Sigmoid colon (tissue), 7 donors: ENCODE measurements at regions of chr13 and their contacts with region 1.

Region 1: GRCh38 chr13:30865123-30866049 is 40.7 kb upstream of the MEDAG start:
- DNase-seq: peak; percentile 92
- H3K4me3 ChIP-seq: peak overlapping the region in 1 of 4 donors; percentile 17
- H3K27ac ChIP-seq: peak overlapping the region; percentile 73 to 87 (median 86)
- H3K4me1 ChIP-seq: peaks cover 0 to 77% (median 62%) of the 10 kb centered on the region in 4 donors
- H3K27me3 ChIP-seq: no peaks in the 10 kb centered on the region
- CTCF ChIP-seq: peak; percentile 86 to 97 (median 94)
- EP300 ChIP-seq: peak in 1 of 4 donors; percentile 1
- POLR2A ChIP-seq: no peak

Region 2: DNA sequence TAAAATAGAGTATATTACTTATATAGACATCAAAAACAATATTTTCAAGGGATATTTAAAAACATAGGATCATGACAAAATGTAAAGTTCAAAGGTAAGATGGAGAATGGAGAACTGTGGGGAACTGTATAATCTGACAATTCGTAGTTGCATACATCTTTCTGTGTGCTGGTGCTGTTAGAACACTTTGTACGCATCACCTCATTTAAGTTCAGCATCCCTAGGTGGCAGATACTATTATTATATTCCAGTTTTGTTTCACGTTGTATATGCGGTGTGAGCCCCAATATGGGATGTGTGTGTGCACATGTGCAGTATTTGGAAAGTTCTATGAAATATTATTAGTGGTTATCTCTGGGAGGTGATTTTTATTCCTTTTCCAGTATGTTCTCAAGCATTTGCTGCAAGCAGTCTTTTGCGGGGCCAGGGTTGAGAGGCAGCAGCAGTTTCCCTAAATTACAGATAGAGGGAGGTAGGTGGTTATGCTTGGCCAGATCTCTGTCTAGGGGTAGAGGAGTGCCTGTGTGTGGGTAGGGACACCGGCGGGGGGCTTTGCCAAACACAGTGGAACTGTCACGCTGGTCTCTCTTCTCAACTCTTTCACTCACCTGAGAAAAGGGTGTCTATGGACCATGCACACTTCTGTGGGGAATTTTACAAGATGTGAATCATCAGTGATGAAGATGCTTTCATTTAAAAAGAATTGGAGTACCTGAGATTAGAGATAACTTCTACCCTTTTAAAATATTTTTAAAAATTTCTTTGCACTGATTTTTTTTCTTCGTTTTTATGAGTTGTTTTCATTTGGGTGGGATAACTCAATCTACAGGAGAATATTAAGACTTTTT is 185.7 kb before region 1 on chr13:
- intact Hi-C with region 1: loop called (anchors 5 kb)
- DNase-seq: no peak
- H3K4me3 ChIP-seq: no peak overlapping the region
- H3K27ac ChIP-seq: no peak overlapping the region
- H3K4me1 ChIP-seq: peaks cover 0 to 11% (median 9%) of the 10 kb centered on the region in 4 donors
- H3K27me3 ChIP-seq: no peaks in the 10 kb centered on the region
- CTCF ChIP-seq: peak in 3 of 4 experiments; percentile 41 to 47 (median 44)
- EP300 ChIP-seq: no peak
- POLR2A ChIP-seq: no peak

Region 3: GRCh38 chr13:30792285-30793000 is 72.9 kb before region 1 on chr13:
- intact Hi-C with region 1: no loop called
- DNase-seq: peak; percentile 89
- H3K4me3 ChIP-seq: no peak overlapping the region
- H3K27ac ChIP-seq: peak overlapping the region; percentile 1 to 66 (median 58)
- H3K4me1 ChIP-seq: peaks cover 0 to 36% (median 31%) of the 10 kb centered on the region in 4 donors
- H3K27me3 ChIP-seq: no peaks in the 10 kb centered on the region
- CTCF ChIP-seq: peak in 1 of 4 experiments; percentile 13
- EP300 ChIP-seq: no peak
- POLR2A ChIP-seq: no peak

Region 4: GRCh38 chr13:30802953-30803478 is 62.4 kb before region 1 on chr13:
- intact Hi-C with region 1: loop called (anchors 5 kb)
- DNase-seq: peak; percentile 93
- H3K4me3 ChIP-seq: peak overlapping the region; percentile 17 to 50 (median 46)
- H3K27ac ChIP-seq: peak overlapping the region; percentile 36 to 76 (median 64)
- H3K4me1 ChIP-seq: peaks cover 0 to 30% (median 13%) of the 10 kb centered on the region in 4 donors
- H3K27me3 ChIP-seq: no peaks in the 10 kb centered on the region
- CTCF ChIP-seq: peak; percentile 87 to 94 (median 91)
- EP300 ChIP-seq: peak in 1 of 4 donors; percentile 3
- POLR2A ChIP-seq: no peak

Region 5: DNA sequence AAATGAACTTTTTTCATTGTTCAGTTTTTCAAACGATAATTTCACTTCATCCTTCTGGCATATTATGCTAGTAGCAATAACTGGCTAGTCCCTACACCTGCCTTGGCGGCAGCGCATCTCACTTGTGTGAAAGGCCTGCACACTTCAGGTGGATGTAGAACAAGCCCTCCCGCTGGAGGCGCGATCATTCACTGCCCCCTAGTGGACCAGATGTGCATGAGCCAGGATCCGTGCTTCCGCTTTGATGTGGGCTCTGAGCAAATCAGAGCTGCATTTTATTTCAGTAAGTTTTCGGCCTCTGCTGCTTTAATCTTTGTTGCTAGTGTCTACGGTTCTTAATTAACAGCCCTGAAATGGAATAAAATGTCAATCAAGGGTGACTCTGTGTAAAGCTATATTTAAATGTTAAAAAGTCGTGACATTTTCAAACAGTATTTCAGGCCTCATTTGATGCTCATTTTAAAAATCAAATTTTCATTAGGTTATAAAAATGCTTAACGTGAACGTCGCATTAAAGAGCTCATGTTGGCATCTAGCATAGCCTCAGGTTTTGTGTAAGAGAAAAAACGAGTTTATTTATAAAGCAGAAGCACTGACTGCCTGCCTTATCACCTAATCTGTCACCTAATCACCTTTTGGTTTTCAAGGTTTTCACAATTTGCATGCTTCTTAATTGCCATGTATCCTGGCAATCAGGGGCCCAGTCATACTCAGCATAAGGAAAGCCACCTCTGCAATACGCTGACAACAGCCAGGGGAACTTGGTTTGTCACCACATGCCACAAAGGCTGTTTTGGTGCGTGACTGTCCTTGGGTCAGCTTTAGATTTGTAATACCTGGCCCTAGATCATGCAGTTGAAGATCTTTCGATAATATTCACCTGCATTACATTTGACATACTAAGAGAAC is 179.2 kb after region 1 on chr13:
- intact Hi-C with region 1: loop called (anchors 5 kb)
- DNase-seq: peak; percentile 89
- H3K4me3 ChIP-seq: no peak overlapping the region
- H3K27ac ChIP-seq: no peak overlapping the region
- H3K4me1 ChIP-seq: peaks cover 0 to 28% (median 21%) of the 10 kb centered on the region in 4 donors
- H3K27me3 ChIP-seq: no peaks in the 10 kb centered on the region
- CTCF ChIP-seq: peak; percentile 50 to 95 (median 88)
- EP300 ChIP-seq: no peak
- POLR2A ChIP-seq: no peak

Region 6: GRCh38 chr13:31161828-31162590 is 296.6 kb after region 1 on chr13 and contains the start of gene HSPH1:
- intact Hi-C with region 1: loop called (anchors 10 kb)
- DNase-seq: peak; percentile 99
- H3K4me3 ChIP-seq: peak within 1 kb of the TSS; percentile 66 to 92 (median 75)
- H3K27ac ChIP-seq: peak within 1 kb of the TSS; percentile 84 to 98 (median 90)
- H3K4me1 ChIP-seq: peaks cover 0 to 20% (median 18%) of the 10 kb centered on the region in 4 donors
- H3K27me3 ChIP-seq: no peaks in the 10 kb centered on the region
- CTCF ChIP-seq: peak in 1 of 4 experiments; percentile 10
- EP300 ChIP-seq: peak in 1 of 4 donors; percentile 80
- POLR2A ChIP-seq: peak; percentile 18 to 57
- total RNA-seq, gene HSPH1: 30.7 to 41.5 (median 33.7) TPM